Ascending aorta (tissue), 2 donors: ENCODE measurements at regions of chr2 and their contacts with region 1.

Region 1: DNA sequence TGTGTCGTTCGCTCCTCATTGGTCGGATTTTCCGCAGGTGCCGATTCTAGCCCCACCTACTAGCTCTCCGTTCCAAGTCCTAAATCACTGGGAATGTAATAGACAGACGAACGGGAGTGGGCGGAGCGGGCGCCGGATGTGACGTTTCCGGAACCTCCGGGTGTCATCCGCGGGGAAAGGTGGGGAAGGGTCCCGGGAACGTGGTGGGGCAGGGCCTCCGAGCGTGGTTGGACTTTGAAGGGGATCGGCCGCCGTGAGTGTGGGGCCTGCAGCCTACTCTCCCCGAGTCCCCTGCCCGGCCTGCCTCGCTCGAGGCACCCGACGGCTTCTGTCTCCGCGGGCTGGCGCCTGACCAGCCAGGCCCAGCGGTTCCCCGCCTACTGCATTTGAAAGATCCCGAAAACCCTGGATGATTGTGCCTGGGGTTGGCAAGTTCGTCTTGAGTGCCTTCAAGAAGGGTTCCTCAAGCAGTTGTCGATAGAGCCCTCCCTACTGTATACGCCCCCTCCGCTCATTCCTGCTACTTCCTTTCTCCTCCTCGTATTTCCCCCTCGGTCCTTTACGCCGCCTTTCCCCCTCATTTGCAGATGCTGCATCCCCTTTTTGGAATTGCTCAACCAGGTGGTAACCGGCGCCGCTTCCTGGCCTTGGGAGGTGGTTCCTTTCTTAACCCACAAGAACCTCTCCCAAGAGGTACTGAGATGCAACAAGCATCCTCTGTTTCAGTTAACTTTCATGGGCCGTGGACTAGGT is at the start of gene STAMBP:
- DNase-seq: peak; percentile 86 to 98
- H3K4me3 ChIP-seq: peak within 1 kb of the TSS; percentile 81 to 91
- H3K27ac ChIP-seq: peak within 1 kb of the TSS; percentile 98 to 99
- H3K4me1 ChIP-seq: peaks cover 3 to 10% of the 10 kb centered on the region in 2 donors
- H3K27me3 ChIP-seq: no peaks in the 10 kb centered on the region
- CTCF ChIP-seq: no peak
- total RNA-seq, gene STAMBP: 36.4 TPM

Region 2: GRCh38 chr2:73870084-73870483 is 41.1 kb after region 1 on chr2:
- intact Hi-C with region 1: no loop called
- DNase-seq: peak; percentile 29 to 94
- H3K4me3 ChIP-seq: no peak overlapping the region
- H3K27ac ChIP-seq: peak overlapping the region; percentile 80 to 86
- H3K4me1 ChIP-seq: peaks cover 0 to 9% of the 10 kb centered on the region in 2 donors
- H3K27me3 ChIP-seq: no peaks in the 10 kb centered on the region
- CTCF ChIP-seq: no peak

Region 3: DNA sequence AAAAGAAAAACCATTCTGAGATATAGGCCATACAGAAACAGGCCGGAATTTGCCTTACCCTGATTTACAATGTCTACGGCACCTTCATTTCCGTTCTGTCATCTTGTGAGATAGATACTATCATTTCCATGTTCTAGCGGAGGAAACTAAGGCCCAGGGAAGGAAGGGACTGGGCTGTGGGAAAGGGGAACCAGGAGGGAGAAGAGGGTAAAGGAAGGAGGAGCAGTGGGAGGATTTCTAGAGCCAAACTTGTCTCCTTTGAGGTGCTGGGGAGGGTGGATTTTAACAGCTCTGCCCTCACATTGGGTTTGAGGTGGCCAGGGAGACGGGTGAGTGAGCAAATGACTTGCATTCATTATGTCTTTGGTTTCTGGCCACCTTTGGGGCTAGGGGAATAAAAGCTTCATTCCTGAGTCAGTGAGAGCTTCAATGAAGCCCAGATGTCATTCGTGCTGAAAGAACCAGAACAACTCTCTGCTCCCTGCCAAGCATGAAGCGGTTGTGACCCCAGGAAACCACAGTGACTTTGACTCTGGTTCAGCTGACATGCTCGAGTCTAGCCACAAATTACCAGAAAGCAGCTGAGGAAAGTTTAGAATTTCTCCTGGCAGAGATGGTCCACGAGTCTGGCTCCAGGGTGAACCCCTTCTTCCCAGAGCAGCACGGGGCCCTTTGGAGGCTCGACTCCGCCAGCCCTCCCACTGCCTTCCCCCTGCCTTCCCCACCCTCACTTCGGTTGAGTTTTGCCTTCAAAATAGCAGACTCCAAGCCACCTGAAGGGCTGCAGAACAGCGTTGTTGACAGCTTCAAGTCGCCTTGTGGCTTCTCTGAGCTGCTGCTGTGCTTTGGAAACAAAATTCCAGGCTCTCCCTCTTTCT is 67.6 kb after region 1 on chr2:
- intact Hi-C with region 1: loop called (anchors 2 kb)
- DNase-seq: no peak
- H3K4me3 ChIP-seq: peak overlapping the region; percentile 4 to 65
- H3K27ac ChIP-seq: peak overlapping the region; percentile 87 to 91
- H3K4me1 ChIP-seq: peaks cover 5 to 11% of the 10 kb centered on the region in 2 donors
- H3K27me3 ChIP-seq: no peaks in the 10 kb centered on the region
- CTCF ChIP-seq: no peak

Region 4: DNA sequence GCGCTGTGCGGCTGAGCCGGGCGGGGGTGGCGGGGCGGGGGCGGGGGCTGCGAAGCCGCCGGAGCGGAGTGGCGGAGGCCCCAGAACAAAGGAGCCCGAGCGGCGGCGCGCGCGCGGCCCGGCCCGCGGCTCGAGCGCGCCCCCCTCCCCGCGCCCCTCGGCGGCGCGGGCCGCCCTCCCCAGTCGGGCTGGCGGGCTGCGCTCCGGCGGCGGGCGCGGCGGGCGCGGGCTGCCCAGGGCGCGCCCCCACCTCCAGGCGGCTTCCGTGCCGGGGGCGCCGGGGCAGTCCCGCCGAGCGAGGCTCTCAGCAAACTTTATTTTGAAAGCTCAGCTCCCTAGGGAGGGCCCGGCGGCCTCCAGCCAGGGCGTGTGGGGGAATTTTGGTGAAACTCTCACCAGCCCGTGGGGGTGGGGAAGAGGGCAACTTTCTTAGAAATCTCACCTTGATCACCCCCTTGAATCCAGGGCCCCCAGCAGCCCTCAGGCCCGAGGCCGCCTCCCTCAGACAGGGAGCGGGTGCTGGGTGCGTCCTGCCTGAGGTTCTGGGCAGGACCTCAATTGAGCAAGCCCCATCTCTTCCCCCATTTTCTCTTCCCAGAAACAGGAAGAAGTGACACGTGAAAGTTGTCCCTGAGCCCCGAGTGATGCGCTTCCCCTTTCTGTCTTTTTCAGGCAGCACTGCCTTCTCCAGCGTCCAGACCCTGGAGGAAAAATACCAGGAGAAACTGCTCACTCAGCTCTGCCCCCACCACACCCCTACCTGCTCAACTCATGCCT is 156.5 kb after region 1 on chr2:
- intact Hi-C with region 1: loop called (anchors 2 kb)
- DNase-seq: no peak
- H3K4me3 ChIP-seq: peak overlapping the region; percentile 46 to 74
- H3K27ac ChIP-seq: no peak overlapping the region
- H3K4me1 ChIP-seq: peaks cover 6 to 34% of the 10 kb centered on the region in 2 donors
- H3K27me3 ChIP-seq: no peaks in the 10 kb centered on the region
- CTCF ChIP-seq: no peak

Region 5: GRCh38 chr2:74025971-74026612 is 197.1 kb after region 1 on chr2:
- intact Hi-C with region 1: no loop called
- DNase-seq: peak in 1 of 2 donors; percentile 42
- H3K4me3 ChIP-seq: no peak overlapping the region
- H3K27ac ChIP-seq: no peak overlapping the region
- H3K4me1 ChIP-seq: no peaks in the 10 kb centered on the region
- H3K27me3 ChIP-seq: no peaks in the 10 kb centered on the region
- CTCF ChIP-seq: no peak

Region 6: GRCh38 chr2:74119912-74120825 is 291.2 kb after region 1 on chr2:
- intact Hi-C with region 1: loop called (anchors 5 kb)
- DNase-seq: peak in 1 of 2 donors; percentile 89
- H3K4me3 ChIP-seq: peak overlapping the region; percentile 70 to 78
- H3K27ac ChIP-seq: peak overlapping the region; percentile 84 to 87
- H3K4me1 ChIP-seq: no peaks in the 10 kb centered on the region
- H3K27me3 ChIP-seq: no peaks in the 10 kb centered on the region
- CTCF ChIP-seq: peak; percentile 57 to 79 (median 76)

Region 7: DNA sequence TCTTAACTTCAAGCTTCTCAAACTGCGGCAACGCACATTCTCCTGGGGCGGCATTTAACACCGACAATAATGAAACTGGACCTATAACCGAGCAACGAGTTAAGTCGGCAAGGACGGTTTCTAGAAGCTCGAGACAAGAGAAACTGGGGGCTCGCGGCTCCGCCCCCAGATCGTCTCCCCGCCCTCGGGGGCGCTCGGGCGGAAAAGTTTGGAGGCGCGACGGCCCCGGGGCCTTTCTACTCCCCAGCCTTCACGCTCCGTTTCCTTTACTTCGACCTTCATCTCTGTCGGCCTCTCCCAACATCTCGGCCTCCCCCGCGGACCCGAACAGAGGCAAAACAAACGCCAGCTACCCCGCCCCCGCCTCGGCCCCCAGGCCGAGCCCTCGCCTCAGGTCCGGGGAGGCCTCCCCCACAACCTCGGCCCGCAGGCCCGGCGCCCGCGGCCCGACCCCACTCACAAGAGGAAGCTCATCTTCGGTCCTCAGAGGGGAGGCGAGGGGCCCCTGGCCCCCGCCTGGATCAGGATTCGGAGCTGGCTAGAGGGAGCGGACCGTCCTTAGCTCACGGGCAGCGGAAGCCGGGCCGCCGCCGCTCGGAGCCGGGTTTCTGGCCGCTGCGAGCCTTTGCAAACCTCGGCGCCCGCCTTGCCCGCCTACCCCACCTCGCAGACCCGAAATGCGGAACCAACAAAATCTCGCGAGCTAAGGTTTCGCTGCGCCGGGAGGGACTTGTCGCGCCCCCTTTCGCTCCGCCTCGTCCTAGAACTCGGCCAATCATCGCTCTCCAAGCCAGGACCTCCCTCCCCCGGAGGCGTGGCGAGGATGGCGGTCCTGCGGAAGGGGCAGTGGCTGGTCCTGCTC is 349.4 kb after region 1 on chr2 and contains the start of gene MOB1A:
- intact Hi-C with region 1: loop called (anchors 1 kb)
- DNase-seq: peak; percentile 91 to 99
- H3K4me3 ChIP-seq: peak within 1 kb of the TSS; percentile 76 to 100
- H3K27ac ChIP-seq: peak within 1 kb of the TSS; percentile 88 to 98
- H3K4me1 ChIP-seq: peaks cover 0 to 26% of the 10 kb centered on the region in 2 donors
- H3K27me3 ChIP-seq: no peaks in the 10 kb centered on the region
- CTCF ChIP-seq: no peak
- total RNA-seq, gene MOB1A: 56.8 TPM

Region 8: GRCh38 chr2:74261204-74261864 is 432.3 kb after region 1 on chr2:
- intact Hi-C with region 1: loop called (anchors 1 kb)
- DNase-seq: peak in 1 of 2 donors; percentile 73
- H3K4me3 ChIP-seq: no peak overlapping the region
- H3K27ac ChIP-seq: no peak overlapping the region
- H3K4me1 ChIP-seq: no peaks in the 10 kb centered on the region
- H3K27me3 ChIP-seq: no peaks in the 10 kb centered on the region
- CTCF ChIP-seq: peak; percentile 49 to 77 (median 65)

Region 9: DNA sequence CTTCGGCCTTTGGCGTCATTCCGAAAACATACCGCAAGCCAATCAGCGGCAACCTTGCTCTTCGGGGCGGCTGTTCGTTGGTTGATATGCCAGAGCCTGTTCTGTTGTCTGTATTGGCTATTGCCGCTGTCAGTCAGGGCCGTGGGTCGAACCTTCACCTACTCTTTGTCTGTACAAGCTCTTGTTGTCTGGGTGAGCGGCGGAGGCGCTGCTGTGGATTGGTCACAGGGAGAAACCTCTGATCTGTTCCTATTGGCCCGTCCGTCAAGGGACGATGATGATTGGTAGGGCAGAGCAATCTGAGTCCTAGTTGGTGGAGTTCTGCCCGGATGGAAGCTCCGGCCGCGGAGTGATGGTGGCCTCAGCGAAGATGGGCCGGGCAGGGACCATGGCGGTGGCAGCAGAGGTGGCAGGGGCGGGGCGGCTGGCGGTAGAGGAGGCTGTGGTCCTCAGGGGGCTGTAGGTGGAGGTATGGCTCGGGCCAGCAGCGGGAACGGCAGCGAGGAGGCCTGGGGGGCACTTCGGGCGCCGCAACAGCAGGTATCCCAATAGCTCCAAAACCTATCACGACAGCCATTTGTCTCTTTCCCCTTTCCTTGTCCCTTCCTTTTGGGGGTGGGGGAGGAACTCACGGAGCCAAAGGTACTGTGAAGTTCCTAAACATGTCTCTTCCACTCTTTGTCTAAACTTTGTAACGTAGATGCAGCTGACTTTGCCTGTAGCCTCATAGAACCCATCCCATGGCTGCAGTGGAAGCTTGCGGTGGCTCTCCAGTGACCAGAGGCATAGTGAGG is 629.3 kb after region 1 on chr2 and contains the start of gene WBP1:
- intact Hi-C with region 1: loop called (anchors 5 kb)
- DNase-seq: peak; percentile 100
- H3K4me3 ChIP-seq: peak within 1 kb of the TSS; percentile 72 to 78
- H3K27ac ChIP-seq: peak within 1 kb of the TSS; percentile 91 to 94
- H3K4me1 ChIP-seq: peaks cover 7 to 31% of the 10 kb centered on the region in 2 donors
- H3K27me3 ChIP-seq: no peaks in the 10 kb centered on the region
- CTCF ChIP-seq: no peak
- total RNA-seq, gene WBP1: 18.1 TPM